ENCODE measurements at regions of chr17 and their contacts with region 1.

Region 1: GRCh38 chr17:1724506-1725362 is at the start of gene WDR81:
- DNase-seq: peak; percentile 88 to 91
- H3K4me3 ChIP-seq: peak within 1 kb of the TSS; percentile 52 to 59
- H3K27ac ChIP-seq: peak within 1 kb of the TSS; percentile 81 to 96
- H3K4me1 ChIP-seq: peaks cover 3 to 17% of the 10 kb centered on the region in 2 donors
- H3K27me3 ChIP-seq: no peaks in the 10 kb centered on the region
- CTCF ChIP-seq: peak in 1 of 4 experiments; percentile 3
- POLR2A ChIP-seq: peak; percentile 45 to 57
- total RNA-seq, gene WDR81: 23.6 to 40.7 (median 29.9) TPM

Region 2: GRCh38 chr17:1783834-1784611 is 59.3 kb after region 1 on chr17:
- intact Hi-C with region 1: loop called (anchors 5 kb)
- DNase-seq: peak; percentile 88 to 97
- H3K4me3 ChIP-seq: peak overlapping the region; percentile 2 to 6
- H3K27ac ChIP-seq: peak overlapping the region; percentile 89 to 97
- H3K4me1 ChIP-seq: peaks cover 8 to 12% of the 10 kb centered on the region in 2 donors
- H3K27me3 ChIP-seq: no peaks in the 10 kb centered on the region
- CTCF ChIP-seq: peak; percentile 83 to 92 (median 88)
- POLR2A ChIP-seq: peak; percentile 35 to 65